AG04450 (cell line): ENCODE measurements at regions of chr20 and their contacts with region 1.

Region 1: DNA sequence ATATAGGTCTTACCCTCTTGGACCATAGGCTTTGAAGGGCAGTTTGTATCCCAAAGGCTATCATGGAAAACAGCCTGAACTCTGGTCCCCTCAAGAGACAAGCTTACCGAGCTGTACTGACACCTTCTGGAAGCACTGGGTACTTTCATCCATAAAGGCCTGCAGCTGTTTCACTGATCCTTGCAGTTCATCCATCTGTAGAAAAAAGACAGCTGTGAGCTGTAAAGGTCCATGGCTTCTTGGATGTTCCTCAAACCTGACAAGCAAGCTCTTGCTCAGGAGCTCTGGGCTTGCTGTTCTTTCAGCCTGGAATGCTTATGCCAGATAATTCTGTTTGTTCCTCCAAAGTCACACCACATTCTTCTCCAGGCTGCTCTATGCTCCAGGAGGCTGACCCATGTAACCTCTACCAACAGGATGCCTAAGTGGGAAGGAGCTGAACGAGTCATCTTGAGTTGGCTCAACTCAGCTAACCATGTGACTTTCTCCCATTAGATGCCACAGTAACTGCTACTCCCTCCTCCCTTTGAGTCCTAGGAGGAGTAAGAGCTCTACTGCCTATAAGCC is 8.8 kb upstream of the NDRG3 start:
- DNase-seq: peak; percentile 74
- H3K4me3 ChIP-seq: no peak overlapping the region
- H3K27ac ChIP-seq: peak overlapping the region; percentile 40
- H3K27me3 ChIP-seq: no peaks in the 10 kb centered on the region
- CTCF ChIP-seq: peak; percentile 92

Region 2: DNA sequence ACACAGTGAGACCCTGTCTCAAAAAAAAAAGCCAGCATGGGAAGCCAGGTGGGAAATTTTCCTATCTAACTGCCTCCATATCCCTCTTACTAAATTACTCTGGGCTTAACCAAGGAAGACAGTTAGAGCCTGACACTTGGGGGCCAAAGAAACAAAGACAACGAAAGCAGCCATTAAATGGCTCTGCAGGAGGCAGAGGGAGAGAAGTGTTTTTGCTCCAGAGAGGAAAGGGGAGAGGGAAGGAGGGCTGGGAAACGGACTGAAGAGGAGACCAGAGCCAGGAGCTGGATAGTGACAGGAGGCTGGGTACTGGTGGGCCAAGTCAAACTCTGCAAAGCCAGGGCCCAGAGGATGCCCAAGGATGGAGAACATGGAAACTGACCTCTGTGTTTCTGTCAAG is 192.0 kb before region 1 on chr20:
- CTCF ChIA-PET with region 1: interaction called, 15 read pairs
- POLR2A ChIA-PET with region 1: no interaction called
- DNase-seq: no peak
- H3K4me3 ChIP-seq: no peak overlapping the region
- H3K27ac ChIP-seq: no peak overlapping the region
- H3K27me3 ChIP-seq: no peaks in the 10 kb centered on the region
- CTCF ChIP-seq: no peak

Region 3: DNA sequence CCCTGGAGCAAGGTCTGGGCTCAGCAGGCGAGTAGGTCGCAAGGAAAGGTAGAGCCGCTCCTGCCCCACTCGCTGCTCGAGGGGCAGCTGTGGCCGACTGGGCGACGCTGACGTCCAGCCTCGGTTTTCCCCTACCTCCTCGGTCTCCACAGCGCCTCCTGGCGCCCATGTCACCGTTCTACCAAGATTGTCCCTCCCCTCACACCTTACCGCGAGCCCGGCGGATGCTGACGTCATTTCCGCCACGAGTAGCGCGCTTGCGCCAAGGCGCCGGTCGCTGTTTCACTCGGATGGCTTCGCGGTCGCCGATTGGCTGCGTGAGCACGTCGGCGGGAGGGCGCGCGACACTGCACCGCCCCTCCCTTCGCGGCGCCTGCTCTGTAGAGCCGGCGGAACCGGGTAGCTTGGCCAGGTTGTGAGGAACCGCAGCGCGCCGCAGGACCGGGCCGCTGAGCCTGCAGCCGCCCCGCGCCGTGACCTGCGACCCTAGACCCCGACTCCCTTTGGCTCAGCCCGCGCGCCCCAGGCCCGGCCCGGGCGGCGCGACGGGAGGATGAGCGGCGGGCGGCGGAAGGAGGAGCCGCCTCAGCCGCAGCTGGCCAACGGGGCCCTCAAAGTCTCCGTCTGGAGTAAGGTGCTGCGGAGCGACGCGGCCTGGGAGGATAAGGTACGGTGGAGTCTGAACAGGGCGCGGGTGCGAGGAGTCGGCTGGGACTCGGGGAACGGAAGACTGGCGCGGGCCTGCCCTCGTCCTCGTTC is 149.2 kb before region 1 on chr20 and contains the start of gene RAB5IF:
- CTCF ChIA-PET with region 1: interaction called, 12 read pairs
- POLR2A ChIA-PET with region 1: interaction called, 4 read pairs
- DNase-seq: peak; percentile 98
- H3K4me3 ChIP-seq: peak within 1 kb of the TSS; percentile 99
- H3K27ac ChIP-seq: peak within 1 kb of the TSS; percentile 32
- H3K27me3 ChIP-seq: peaks cover 2% of the 10 kb centered on the region
- CTCF ChIP-seq: peak; percentile 87
- polyA plus RNA-seq, gene RAB5IF: 125 and 151 TPM in 2 replicates

Region 4: DNA sequence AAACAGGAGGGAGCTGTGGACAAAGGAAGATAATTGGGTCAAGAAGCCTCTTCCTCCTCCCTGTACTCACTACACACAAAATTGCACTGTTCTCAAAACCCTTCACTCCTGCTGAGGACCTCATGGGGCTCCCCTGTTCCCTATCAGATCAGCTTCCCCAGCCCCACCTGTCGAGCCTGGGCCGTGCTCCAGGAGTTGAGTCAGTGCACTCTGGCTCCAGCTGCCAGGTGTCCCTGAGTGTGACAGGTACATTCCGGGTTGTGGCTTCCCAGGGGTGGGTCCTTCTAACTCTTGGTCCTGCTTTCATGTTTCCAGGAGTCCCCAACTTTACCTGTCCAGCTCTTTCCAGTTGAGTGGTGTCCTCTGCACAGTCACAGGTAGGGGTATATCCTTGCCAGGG is 140.8 kb before region 1 on chr20:
- CTCF ChIA-PET with region 1: interaction called, 34 read pairs
- POLR2A ChIA-PET with region 1: no interaction called
- DNase-seq: no peak
- H3K4me3 ChIP-seq: no peak overlapping the region
- H3K27ac ChIP-seq: no peak overlapping the region
- H3K27me3 ChIP-seq: no peaks in the 10 kb centered on the region
- CTCF ChIP-seq: no peak

Region 5: DNA sequence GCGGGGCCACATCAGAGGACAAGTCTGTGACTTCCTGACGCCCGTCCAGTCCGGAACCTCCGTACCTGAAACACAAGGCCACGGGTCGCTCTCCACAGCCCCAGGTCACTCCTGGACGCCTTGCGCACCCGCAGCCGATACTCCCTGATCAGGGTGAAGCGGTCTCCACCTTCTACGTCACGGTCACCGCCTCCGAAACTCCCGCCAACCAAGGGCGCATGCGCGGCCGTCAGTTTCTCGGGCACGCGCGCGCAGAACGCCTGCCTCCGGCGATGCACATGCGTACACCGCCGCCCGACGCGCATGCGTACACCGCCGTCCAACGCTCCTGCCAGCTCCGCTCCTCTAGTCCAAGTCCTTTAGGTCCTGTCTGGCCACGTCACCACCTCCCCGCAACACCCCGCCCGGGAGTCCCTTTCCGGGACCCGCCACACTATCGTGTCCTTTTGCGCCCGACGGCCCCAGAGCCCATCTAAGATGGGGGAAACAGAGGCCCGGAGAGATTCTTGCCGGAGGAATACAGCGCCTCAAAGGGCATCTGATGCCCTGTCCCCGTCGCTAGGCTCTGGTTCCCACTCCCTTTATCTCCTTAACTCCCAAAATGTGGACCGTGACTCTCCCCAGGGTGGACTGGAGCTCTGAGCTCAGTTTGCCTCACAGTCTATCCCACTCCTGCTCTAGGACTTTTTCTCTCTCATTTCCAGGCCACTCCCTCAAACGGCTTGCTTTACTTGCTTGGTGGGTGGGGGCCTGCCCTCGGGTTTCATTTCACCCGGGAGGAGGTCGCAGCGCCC is 19.1 kb after region 1 on chr20 and contains the start of gene DSN1:
- CTCF ChIA-PET with region 1: interaction called, 17 read pairs
- POLR2A ChIA-PET with region 1: interaction called, 11 read pairs
- DNase-seq: peak; percentile 95
- H3K4me3 ChIP-seq: peak within 1 kb of the TSS; percentile 91
- H3K27ac ChIP-seq: peak within 1 kb of the TSS; percentile 98
- H3K27me3 ChIP-seq: no peaks in the 10 kb centered on the region
- CTCF ChIP-seq: no peak; the same call in 1 of the 2 replicates
- polyA plus RNA-seq, gene DSN1: 6.0 and 8.7 TPM in 2 replicates